Activated CD8-positive, alpha-beta T cell treated with anti-CD3 and anti-CD28 coated beads for 36 hours (primary cell): ENCODE measurements at regions of chr2 and their contacts with region 1.

Region 1: GRCh38 chr2:241803387-241804325 is 5.3 kb upstream of the NEU4 start:
- DNase-seq: peak; percentile 76
- ATAC-seq: peak; percentile 80
- H3K4me3 Mint-ChIP-seq: peak overlapping the region; percentile 70
- H3K27ac Mint-ChIP-seq: peak overlapping the region; percentile 77
- H3K4me1 Mint-ChIP-seq: peaks cover 10% of the 10 kb centered on the region
- H3K27me3 Mint-ChIP-seq: peaks cover 3% of the 10 kb centered on the region
- CTCF ChIP-seq: no peak

Region 2: GRCh38 chr2:241788572-241788971 is 15.1 kb before region 1 on chr2:
- CTCF ChIA-PET with region 1: no interaction called
- POLR2A ChIA-PET with region 1: interaction called, 10 read pairs
- intact Hi-C with region 1: no loop called
- DNase-seq: peak; percentile 81
- ATAC-seq: peak; percentile 95
- H3K4me3 Mint-ChIP-seq: no peak overlapping the region
- H3K27ac Mint-ChIP-seq: peak overlapping the region; percentile 79
- H3K4me1 Mint-ChIP-seq: peaks cover 21% of the 10 kb centered on the region
- H3K27me3 Mint-ChIP-seq: peaks cover 4% of the 10 kb centered on the region
- CTCF ChIP-seq: no peak

Region 3: DNA sequence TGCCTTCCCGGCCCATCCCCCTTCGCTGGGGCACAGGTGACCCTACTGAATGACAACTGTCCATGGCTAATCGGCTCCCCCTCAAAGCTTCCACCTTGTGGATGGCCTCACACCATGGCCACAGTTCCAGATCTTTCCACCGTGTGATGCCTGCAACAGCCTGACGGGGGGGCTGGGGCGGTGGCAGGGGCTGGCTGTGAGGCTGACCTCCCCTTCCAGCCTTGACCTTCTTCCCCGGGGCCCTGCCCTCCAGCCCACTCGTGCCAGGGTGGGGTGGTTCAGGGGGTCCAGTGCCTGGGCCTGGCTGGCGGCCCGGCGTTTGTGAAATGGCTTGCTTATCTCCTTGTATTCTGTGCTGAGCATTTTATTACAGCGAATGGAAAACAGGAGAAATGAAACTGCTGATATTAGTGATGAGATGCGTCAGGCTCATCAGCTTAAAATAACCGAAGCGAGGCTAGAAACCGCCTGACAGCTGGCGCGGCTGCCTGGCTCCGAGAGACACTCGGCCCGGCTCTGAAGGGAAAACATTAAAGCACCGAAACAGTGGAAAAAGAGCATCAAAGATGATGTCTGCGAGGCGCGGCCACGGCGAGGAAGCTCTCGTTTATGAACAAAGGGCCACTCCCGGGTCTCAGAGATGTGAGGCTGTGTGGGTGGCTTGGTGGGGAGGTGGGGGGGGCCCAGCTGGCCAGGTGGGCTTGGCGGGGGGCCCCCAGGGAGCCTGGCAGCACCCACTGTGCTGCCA is 56.0 kb after region 1 on chr2:
- CTCF ChIA-PET with region 1: no interaction called
- POLR2A ChIA-PET with region 1: interaction called, 12 read pairs
- intact Hi-C with region 1: no loop called
- DNase-seq: peak; percentile 94
- ATAC-seq: peak; percentile 50
- H3K4me3 Mint-ChIP-seq: peak overlapping the region; percentile 82
- H3K27ac Mint-ChIP-seq: peak overlapping the region; percentile 92
- H3K4me1 Mint-ChIP-seq: peaks cover 63% of the 10 kb centered on the region
- H3K27me3 Mint-ChIP-seq: peaks cover 11% of the 10 kb centered on the region
- CTCF ChIP-seq: peak; percentile 66

Region 4: GRCh38 chr2:241865957-241866789 is 62.5 kb after region 1 on chr2:
- CTCF ChIA-PET with region 1: interaction called, 10 read pairs
- POLR2A ChIA-PET with region 1: no interaction called
- intact Hi-C with region 1: no loop called
- DNase-seq: peak; percentile 58
- ATAC-seq: no peak
- H3K4me3 Mint-ChIP-seq: no peak overlapping the region
- H3K27ac Mint-ChIP-seq: no peak overlapping the region
- H3K4me1 Mint-ChIP-seq: peaks cover 80% of the 10 kb centered on the region
- H3K27me3 Mint-ChIP-seq: peaks cover 21% of the 10 kb centered on the region
- CTCF ChIP-seq: no peak